HepG2 (cell line): ENCODE measurements at regions of chr3 and their contacts with region 1.

Region 1: DNA sequence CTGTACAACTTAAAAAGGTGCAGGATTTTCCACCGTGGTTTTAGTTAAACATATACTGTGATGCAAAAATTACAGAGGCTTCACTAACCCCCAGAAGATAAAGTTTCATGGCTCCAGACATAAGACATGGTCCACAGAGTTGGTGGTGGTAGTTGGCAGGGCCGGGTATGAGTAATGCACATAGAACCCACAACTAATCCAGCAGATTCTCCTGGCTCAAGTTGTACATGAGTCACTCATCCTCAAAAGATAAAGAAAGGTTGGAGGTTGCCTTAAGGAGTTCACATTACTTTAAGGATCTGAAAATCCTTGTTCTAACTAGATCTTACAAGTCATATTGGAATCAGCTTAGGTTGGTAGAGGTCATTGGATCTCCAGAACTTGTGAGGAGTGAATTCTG is 98.3 kb upstream of the ZBTB20 start:
- DNase-seq: no peak
- ATAC-seq: no peak
- H3K4me3 ChIP-seq: no peak overlapping the region
- H3K27ac ChIP-seq: no peak overlapping the region
- H3K4me1 ChIP-seq: no peaks in the 10 kb centered on the region
- H3K27me3 ChIP-seq: no peaks in the 10 kb centered on the region; a peak in 1 of 5 replicates
- CTCF ChIP-seq: no peak
- EP300 ChIP-seq: no peak
- POLR2A ChIP-seq: no peak
- RAD21 ChIP-seq: no peak

Region 2: GRCh38 chr3:114632757-114633424 is 612.5 kb before region 1 on chr3:
- CTCF ChIA-PET with region 1: no interaction called
- POLR2A ChIA-PET with region 1: no interaction called
- in situ Hi-C with region 1: no loop called
- intact Hi-C with region 1: loop called (anchors 5 kb)
- DNase-seq: no peak
- ATAC-seq: no peak
- H3K4me3 ChIP-seq: no peak overlapping the region
- H3K27ac ChIP-seq: no peak overlapping the region
- H3K4me1 ChIP-seq: no peaks in the 10 kb centered on the region
- H3K27me3 ChIP-seq: no peaks in the 10 kb centered on the region
- CTCF ChIP-seq: no peak
- EP300 ChIP-seq: no peak
- POLR2A ChIP-seq: no peak
- RAD21 ChIP-seq: no peak